PC-9 (cell line): ENCODE measurements at regions of chr14 and their contacts with region 1.

Region 1: GRCh38 chr14:102878174-102878969 is 44.1 kb upstream of the AMN start:
- DNase-seq: peak in 1 of 2 experiments; percentile 24
- H3K4me3 ChIP-seq: no peak overlapping the region
- H3K27ac ChIP-seq: no peak overlapping the region
- H3K4me1 ChIP-seq: no peaks in the 10 kb centered on the region
- H3K27me3 ChIP-seq: no peaks in the 10 kb centered on the region
- CTCF ChIP-seq: peak; percentile 42; the same call in 1 of the 2 replicates

Region 2: GRCh38 chr14:101823511-101824120 is 1054.8 kb before region 1 on chr14:
- CTCF ChIA-PET with region 1: interaction called, 11 read pairs
- POLR2A ChIA-PET with region 1: no interaction called
- intact Hi-C with region 1: no loop called
- DNase-seq: no peak
- H3K4me3 ChIP-seq: no peak overlapping the region
- H3K27ac ChIP-seq: no peak overlapping the region
- H3K4me1 ChIP-seq: no peaks in the 10 kb centered on the region
- H3K27me3 ChIP-seq: no peaks in the 10 kb centered on the region
- CTCF ChIP-seq: no peak

Region 3: GRCh38 chr14:102786768-102787167 is 91.6 kb before region 1 on chr14:
- CTCF ChIA-PET with region 1: no interaction called
- POLR2A ChIA-PET with region 1: no interaction called
- intact Hi-C with region 1: no loop called
- DNase-seq: no peak
- H3K4me3 ChIP-seq: no peak overlapping the region
- H3K27ac ChIP-seq: no peak overlapping the region
- H3K4me1 ChIP-seq: no peaks in the 10 kb centered on the region
- H3K27me3 ChIP-seq: no peaks in the 10 kb centered on the region
- CTCF ChIP-seq: no peak

Region 4: GRCh38 chr14:102824832-102825231 is 53.5 kb before region 1 on chr14:
- CTCF ChIA-PET with region 1: interaction called, 3 read pairs
- POLR2A ChIA-PET with region 1: interaction called, 13 read pairs
- intact Hi-C with region 1: no loop called
- DNase-seq: peak in 1 of 2 experiments; percentile 65
- H3K4me3 ChIP-seq: no peak overlapping the region
- H3K27ac ChIP-seq: no peak overlapping the region
- H3K4me1 ChIP-seq: peaks cover 19% of the 10 kb centered on the region
- H3K27me3 ChIP-seq: no peaks in the 10 kb centered on the region
- CTCF ChIP-seq: no peak

Region 5: GRCh38 chr14:102982852-102983470 is 104.6 kb after region 1 on chr14:
- CTCF ChIA-PET with region 1: no interaction called
- POLR2A ChIA-PET with region 1: no interaction called
- intact Hi-C with region 1: no loop called
- DNase-seq: no peak
- H3K4me3 ChIP-seq: no peak overlapping the region
- H3K27ac ChIP-seq: no peak overlapping the region
- H3K4me1 ChIP-seq: no peaks in the 10 kb centered on the region
- H3K27me3 ChIP-seq: no peaks in the 10 kb centered on the region
- CTCF ChIP-seq: no peak; the same call in 1 of the 2 replicates